WTC11 (cell line): ENCODE measurements at regions of chr20 and their contacts with region 1.

Region 1: GRCh38 chr20:2172305-2173175 is 70.9 kb downstream of the STK35 start:
- DNase-seq: peak; percentile 80
- ATAC-seq: peak; percentile 88
- H3K4me3 Mint-ChIP-seq: peak overlapping the region; percentile 57
- H3K27ac Mint-ChIP-seq: no peak overlapping the region
- H3K4me1 Mint-ChIP-seq: peaks cover 3% of the 10 kb centered on the region; the same call in 1 of the 2 replicates
- H3K27me3 Mint-ChIP-seq: peaks cover 3% of the 10 kb centered on the region; the same call in 1 of the 2 replicates
- CTCF ChIP-seq: peak; percentile 91

Region 2: DNA sequence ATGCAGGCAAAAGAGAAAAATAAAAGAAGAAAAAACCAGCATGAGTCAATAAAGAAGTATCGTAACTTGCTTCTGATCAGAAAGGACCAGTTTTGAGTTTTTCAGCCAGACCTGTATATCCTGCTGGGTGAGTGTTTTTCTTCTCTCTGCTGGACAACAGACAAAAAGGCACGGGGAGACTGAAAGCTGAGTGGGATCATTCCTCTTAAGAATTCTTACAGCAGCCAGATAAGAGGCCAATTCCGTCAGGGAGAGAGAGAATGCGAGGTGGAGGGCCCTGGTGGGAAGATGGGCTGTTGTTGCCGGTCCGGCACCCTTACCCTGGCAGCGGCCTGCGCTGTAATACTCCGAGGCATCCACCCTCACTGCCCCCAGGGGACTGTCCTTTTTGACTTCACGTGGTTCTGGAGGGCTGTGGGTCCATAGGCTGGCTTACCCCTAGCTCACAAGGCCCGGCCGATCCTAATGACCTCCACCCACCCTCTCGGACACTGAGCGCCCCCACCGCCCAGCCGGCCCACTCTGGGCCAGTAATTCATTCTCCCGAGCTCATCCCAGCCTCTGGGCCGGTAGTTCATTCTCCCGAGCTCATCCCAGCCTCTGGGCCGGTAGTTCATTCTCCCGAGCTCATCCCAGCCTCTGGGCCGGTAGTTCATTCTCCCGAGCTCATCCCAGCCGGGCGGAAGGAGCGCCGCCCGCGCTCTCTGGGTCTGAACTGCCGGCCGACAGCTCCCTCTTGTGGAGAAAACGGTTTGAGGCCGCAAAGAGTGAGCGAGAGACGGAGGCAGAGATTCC is 395.7 kb before region 1 on chr20:
- CTCF ChIA-PET with region 1: interaction called, 13 read pairs
- POLR2A ChIA-PET with region 1: no interaction called
- DNase-seq: peak; percentile 93
- ATAC-seq: peak; percentile 88
- H3K4me3 Mint-ChIP-seq: peak overlapping the region; percentile 88
- H3K27ac Mint-ChIP-seq: no peak overlapping the region
- H3K4me1 Mint-ChIP-seq: peaks cover 14% of the 10 kb centered on the region
- H3K27me3 Mint-ChIP-seq: peaks cover 3% of the 10 kb centered on the region
- CTCF ChIP-seq: peak; percentile 76; the same call in 1 of the 2 replicates

Region 3: DNA sequence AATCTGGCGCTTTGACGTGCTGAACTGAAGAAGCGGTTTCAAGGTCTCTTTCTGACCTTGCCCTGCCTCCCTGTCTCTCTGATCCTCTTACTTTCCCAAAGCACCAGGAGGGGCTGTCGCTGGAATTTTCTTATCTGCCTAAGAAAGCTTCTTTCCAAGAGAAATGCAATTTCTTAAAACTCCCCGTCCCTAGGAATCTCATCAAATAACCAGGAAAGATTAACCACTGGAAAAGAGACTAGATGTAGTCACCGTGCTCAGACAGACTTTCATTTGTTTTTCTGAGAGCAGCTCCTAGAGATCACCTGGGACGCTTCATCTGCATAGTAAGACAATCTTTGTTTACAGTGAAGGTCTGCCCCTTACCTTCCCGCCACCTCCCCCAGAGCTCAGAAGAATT is 217.3 kb before region 1 on chr20:
- CTCF ChIA-PET with region 1: interaction called, 12 read pairs
- POLR2A ChIA-PET with region 1: no interaction called
- DNase-seq: no peak
- ATAC-seq: peak; percentile 87
- H3K4me3 Mint-ChIP-seq: peak overlapping the region; percentile 57
- H3K27ac Mint-ChIP-seq: peak overlapping the region; percentile 99
- H3K4me1 Mint-ChIP-seq: peaks cover 49% of the 10 kb centered on the region
- H3K27me3 Mint-ChIP-seq: no peaks in the 10 kb centered on the region
- CTCF ChIP-seq: no peak

Region 4: GRCh38 chr20:2005831-2006426 is 166.6 kb before region 1 on chr20:
- CTCF ChIA-PET with region 1: interaction called, 31 read pairs
- POLR2A ChIA-PET with region 1: no interaction called
- DNase-seq: peak; percentile 90
- ATAC-seq: peak; percentile 50; the same call in 1 of the 2 replicates
- H3K4me3 Mint-ChIP-seq: no peak overlapping the region
- H3K27ac Mint-ChIP-seq: no peak overlapping the region
- H3K4me1 Mint-ChIP-seq: peaks cover 10% of the 10 kb centered on the region; the same call in 1 of the 2 replicates
- H3K27me3 Mint-ChIP-seq: peaks cover 20% of the 10 kb centered on the region
- CTCF ChIP-seq: no peak

Region 5: GRCh38 chr20:2122936-2123335 is 49.6 kb before region 1 on chr20:
- CTCF ChIA-PET with region 1: interaction called, 17 read pairs
- POLR2A ChIA-PET with region 1: no interaction called
- DNase-seq: no peak
- ATAC-seq: no peak
- H3K4me3 Mint-ChIP-seq: no peak overlapping the region
- H3K27ac Mint-ChIP-seq: no peak overlapping the region
- H3K4me1 Mint-ChIP-seq: 0 out of 2 replicates have a peak, but pooled peaks cover 2% of the 10 kb centered on the region
- H3K27me3 Mint-ChIP-seq: no peaks in the 10 kb centered on the region
- CTCF ChIP-seq: no peak

Region 6: DNA sequence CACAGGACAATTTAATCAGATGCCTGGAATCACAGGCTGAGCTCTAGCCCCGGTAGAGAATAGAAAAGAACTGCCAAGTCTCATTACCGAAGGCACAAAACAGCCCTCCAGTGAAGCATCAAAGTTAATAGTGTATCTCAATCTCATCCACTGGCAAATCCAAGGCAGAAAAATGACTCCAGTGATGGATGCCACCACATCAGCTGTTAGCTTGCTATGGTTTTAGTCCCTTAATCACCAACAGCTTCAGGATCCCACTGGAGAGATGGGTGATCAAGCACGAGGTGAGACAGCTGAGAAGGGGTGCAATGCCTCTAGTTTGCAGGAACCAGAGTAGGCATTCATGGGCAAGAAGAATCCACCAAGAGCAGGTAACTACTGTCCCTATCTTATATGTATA is 10.8 kb after region 1 on chr20:
- CTCF ChIA-PET with region 1: interaction called, 24 read pairs
- POLR2A ChIA-PET with region 1: no interaction called
- DNase-seq: no peak
- ATAC-seq: no peak
- H3K4me3 Mint-ChIP-seq: no peak overlapping the region
- H3K27ac Mint-ChIP-seq: no peak overlapping the region
- H3K4me1 Mint-ChIP-seq: no peaks in the 10 kb centered on the region
- H3K27me3 Mint-ChIP-seq: no peaks in the 10 kb centered on the region; the same call in 1 of the 2 replicates
- CTCF ChIP-seq: no peak